Activated CD4-positive, alpha-beta T cell treated with anti-CD3 and anti-CD28 coated beads for 36 hours (primary cell): ENCODE measurements at regions of chr4 and their contacts with region 1.

Region 1: GRCh38 chr4:121411151-121411744 is 30.4 kb upstream of the QRFPR start:
- DNase-seq: no peak
- ATAC-seq: no peak
- H3K4me3 Mint-ChIP-seq: no peak overlapping the region
- H3K27ac Mint-ChIP-seq: no peak overlapping the region
- H3K4me1 Mint-ChIP-seq: no peaks in the 10 kb centered on the region
- H3K27me3 Mint-ChIP-seq: peaks cover 40% of the 10 kb centered on the region

Region 2: GRCh38 chr4:121472937-121473721 is 61.9 kb after region 1 on chr4:
- CTCF ChIA-PET with region 1: no interaction called
- POLR2A ChIA-PET with region 1: no interaction called
- intact Hi-C with region 1: loop called (anchors 1 kb)
- DNase-seq: no peak
- ATAC-seq: no peak
- H3K4me3 Mint-ChIP-seq: no peak overlapping the region
- H3K27ac Mint-ChIP-seq: no peak overlapping the region
- H3K4me1 Mint-ChIP-seq: peaks cover 2% of the 10 kb centered on the region
- H3K27me3 Mint-ChIP-seq: peaks cover 3% of the 10 kb centered on the region

Region 3: DNA sequence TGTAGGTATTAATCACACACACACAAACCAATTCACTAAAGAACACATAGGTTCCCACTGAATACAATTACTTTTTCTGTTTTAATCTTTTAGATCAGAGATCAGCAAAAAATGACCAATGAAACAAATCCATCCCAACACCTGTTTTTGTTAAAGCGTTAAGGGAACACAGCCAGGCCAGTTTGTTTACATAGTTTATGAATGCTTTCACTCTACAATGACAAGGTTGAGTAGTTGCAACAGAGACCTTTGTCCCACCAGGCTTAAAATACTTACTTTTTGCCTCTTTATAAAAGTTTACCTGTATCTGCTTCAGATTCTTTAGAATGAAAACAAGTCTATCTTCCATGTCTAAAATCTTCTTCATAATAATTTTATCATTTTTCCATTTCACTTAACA is 89.6 kb after region 1 on chr4:
- CTCF ChIA-PET with region 1: no interaction called
- POLR2A ChIA-PET with region 1: no interaction called
- intact Hi-C with region 1: loop called in 1 of 2 experiments (anchors 5 kb)
- DNase-seq: no peak
- ATAC-seq: no peak
- H3K4me3 Mint-ChIP-seq: no peak overlapping the region
- H3K27ac Mint-ChIP-seq: no peak overlapping the region
- H3K4me1 Mint-ChIP-seq: no peaks in the 10 kb centered on the region
- H3K27me3 Mint-ChIP-seq: peaks cover 40% of the 10 kb centered on the region